ENCODE measurements at regions of chr2 and their contacts with region 1.

Region 1: DNA sequence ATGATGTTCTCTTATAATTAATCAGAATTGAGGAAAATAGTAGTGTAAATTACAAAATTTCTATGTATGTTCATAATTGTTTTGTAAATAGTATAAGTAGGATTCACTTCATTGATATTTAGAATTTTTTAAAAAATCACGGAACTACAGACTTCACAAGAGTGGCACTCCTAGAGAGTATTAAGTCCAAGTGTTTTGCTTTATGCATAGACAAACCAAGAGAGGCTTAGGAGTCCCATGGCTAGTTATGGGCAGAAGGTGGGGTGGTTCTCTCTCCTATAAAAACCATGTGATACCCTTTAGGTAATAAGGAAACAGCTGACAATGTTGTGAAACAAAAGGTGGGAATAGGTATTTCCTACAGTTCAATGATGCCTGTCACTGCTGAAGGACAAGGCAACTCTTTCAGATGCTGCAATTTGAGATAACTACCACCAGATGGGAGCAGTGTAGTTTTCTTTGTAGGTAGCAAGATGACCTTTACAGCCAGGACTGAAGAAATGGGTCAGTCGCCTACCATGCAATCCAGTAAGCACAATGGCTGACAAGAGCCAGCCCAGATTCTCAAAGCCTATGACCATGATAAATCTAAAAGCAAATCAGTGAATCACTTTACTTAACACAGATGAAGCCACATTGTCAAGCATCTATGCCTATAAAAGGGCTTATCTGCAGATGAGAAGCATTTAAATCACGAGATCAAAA is 83.9 kb downstream of the AAK1 start:
- DNase-seq: peak; percentile 27
- ATAC-seq: peak; percentile 75
- H3K4me3 Mint-ChIP-seq: no peak overlapping the region
- H3K27ac Mint-ChIP-seq: peak overlapping the region; percentile 58
- H3K4me1 Mint-ChIP-seq: peaks cover 87% of the 10 kb centered on the region
- H3K27me3 Mint-ChIP-seq: no peaks in the 10 kb centered on the region

Region 2: GRCh38 chr2:69572641-69573040 is 13.0 kb after region 1 on chr2:
- CTCF ChIA-PET with region 1: interaction called, 189 read pairs
- POLR2A ChIA-PET with region 1: no interaction called
- intact Hi-C with region 1: no loop called
- DNase-seq: no peak
- ATAC-seq: no peak
- H3K4me3 Mint-ChIP-seq: no peak overlapping the region
- H3K27ac Mint-ChIP-seq: peak overlapping the region; percentile 28
- H3K4me1 Mint-ChIP-seq: peaks cover 76% of the 10 kb centered on the region
- H3K27me3 Mint-ChIP-seq: no peaks in the 10 kb centered on the region

Region 3: DNA sequence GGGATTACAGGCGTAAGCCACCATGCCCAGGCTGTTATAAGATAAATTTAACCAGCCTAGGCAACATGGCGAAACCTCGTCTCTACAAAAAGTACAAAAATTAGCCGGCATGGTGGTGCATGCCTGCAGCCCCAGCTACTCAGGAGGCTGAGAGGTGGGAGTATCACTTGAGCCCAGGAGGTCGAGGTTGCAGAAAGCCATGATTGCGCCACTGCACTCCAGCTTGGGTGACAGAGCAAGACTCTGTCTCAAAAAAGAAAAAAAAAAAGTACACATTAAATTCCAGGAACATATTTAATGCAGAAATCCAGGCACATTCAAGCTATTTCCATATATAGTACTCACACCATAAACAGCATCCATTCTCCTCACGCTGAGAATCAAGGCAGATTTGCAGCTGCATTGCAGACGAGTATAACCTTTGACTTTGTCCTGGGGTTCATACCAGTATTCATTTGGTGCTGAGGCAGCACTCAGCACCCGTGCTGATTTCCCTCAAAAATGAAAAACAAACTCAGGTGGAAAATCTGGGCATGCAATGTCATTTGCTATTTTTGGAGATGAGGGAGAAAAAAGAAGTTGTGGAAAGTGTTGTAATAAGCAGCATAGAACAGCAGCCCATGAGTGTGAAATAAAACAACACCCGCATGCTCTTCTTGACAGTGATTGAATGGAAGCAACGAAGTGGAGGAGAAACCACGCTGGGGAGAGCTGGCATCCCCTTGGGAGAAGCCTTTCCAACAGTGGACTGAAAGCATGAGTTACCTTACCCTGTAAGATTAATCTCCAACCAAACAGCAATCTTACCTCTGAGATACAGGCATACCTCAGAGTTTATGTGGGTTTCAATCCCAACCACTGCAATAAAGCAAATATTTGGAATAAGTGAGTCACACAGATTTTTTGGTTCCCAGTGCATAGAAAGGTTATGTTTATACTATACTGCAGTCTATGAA is 135.6 kb after region 1 on chr2:
- CTCF ChIA-PET with region 1: interaction called, 8 read pairs
- POLR2A ChIA-PET with region 1: no interaction called
- intact Hi-C with region 1: loop called in 1 of 2 experiments (anchors 5 kb)
- DNase-seq: no peak
- ATAC-seq: peak; percentile 69
- H3K4me3 Mint-ChIP-seq: peak overlapping the region; percentile 7
- H3K27ac Mint-ChIP-seq: peak overlapping the region; percentile 1
- H3K4me1 Mint-ChIP-seq: peaks cover 90% of the 10 kb centered on the region
- H3K27me3 Mint-ChIP-seq: no peaks in the 10 kb centered on the region

Measured in activated CD4-positive, alpha-beta T cell treated with anti-CD3 and anti-CD28 coated beads for 36 hours (primary cell).